Psoas muscle (tissue), 8 donors: ENCODE measurements at regions of chr2 and their contacts with region 1.

Region 1: DNA sequence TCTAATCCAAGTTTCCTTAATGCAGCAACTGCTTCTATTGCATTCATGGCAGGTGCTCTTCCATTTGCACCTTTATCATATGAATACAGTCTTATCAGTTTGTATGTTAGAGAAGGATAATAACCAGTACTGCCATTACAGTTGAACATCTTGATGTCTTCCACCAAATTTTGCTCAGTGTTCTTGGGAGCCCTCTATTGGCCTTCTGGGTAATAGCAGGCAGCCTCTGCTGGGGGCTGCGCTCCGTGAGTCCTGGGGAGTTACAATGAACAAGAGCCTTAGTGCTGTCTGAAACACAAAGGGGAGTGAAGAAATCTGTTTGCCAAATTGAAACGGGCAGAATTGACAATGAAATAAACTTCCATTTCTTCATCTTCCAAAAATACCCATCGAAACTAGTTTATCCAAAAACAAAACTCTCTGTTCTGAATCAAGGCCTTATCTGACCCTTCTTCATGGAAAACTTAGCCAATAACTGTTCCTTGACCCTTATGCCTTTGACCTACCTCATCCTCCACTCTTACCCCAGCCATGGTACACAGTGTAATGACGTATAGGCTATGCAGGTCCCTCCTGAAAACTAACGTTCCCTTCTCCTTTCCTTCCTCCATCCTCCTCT is 79.9 kb downstream of the ALK start:
- DNase-seq: no peak
- ATAC-seq: peak in 3 of 4 donors; percentile 62 to 78 (median 70)
- H3K4me3 ChIP-seq: no peak overlapping the region
- H3K27ac ChIP-seq: no peak overlapping the region
- H3K4me1 ChIP-seq: no peaks in the 10 kb centered on the region
- H3K27me3 ChIP-seq: no peaks in the 10 kb centered on the region
- CTCF ChIP-seq: peak; percentile 84

Region 2: DNA sequence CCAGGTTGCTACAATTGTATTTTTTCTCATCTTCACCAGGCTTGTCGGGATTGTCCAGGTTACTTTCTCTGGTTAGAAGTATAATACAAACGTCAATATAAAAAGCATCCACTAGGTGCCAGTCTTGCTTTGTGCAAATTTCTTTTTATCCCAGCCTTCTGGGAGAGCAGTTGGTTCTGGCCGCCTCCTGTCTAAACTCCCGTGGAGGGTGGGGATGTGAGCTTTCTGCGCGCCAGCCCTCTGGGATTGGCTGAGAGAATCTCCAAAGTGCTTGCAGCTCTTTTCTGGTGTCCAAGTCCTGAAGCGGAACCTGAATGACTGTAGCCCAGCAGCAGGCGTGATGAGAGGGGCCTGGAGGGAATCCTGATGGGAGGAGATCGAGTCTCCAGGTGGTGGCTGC is 882.8 kb before region 1 on chr2:
- intact Hi-C with region 1: loop called in 1 of 2 experiments (anchors 5 kb)
- DNase-seq: peak; percentile 64 to 87
- ATAC-seq: peak; percentile 88 to 92 (median 89)
- H3K4me3 ChIP-seq: no peak overlapping the region
- H3K27ac ChIP-seq: no peak overlapping the region
- H3K4me1 ChIP-seq: peaks cover 5% of the 10 kb centered on the region
- H3K27me3 ChIP-seq: no peaks in the 10 kb centered on the region
- CTCF ChIP-seq: peak; percentile 68

Region 3: DNA sequence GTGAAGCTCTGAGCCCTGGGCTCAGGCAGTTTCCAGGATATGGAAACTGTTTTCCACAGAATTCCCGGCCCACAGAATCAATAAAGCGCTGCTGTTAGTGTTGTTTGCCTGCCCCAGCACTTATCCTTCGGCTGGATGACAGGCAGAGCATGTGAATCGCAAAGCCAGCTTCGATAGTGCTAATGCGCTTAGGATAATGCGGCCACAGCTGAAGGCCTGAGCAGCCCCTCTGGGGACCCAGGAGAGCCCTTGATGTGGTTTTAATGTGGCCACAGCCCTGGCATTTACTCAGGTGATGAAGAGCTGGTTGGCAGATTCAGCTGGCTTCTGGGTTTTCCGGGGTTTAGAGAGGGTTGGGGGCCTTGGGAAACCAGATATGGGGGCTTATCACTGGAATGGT is 790.9 kb before region 1 on chr2:
- intact Hi-C with region 1: no loop called
- DNase-seq: no peak
- ATAC-seq: no peak
- H3K4me3 ChIP-seq: no peak overlapping the region
- H3K27ac ChIP-seq: no peak overlapping the region
- H3K4me1 ChIP-seq: no peaks in the 10 kb centered on the region
- H3K27me3 ChIP-seq: no peaks in the 10 kb centered on the region
- CTCF ChIP-seq: no peak

Region 4: DNA sequence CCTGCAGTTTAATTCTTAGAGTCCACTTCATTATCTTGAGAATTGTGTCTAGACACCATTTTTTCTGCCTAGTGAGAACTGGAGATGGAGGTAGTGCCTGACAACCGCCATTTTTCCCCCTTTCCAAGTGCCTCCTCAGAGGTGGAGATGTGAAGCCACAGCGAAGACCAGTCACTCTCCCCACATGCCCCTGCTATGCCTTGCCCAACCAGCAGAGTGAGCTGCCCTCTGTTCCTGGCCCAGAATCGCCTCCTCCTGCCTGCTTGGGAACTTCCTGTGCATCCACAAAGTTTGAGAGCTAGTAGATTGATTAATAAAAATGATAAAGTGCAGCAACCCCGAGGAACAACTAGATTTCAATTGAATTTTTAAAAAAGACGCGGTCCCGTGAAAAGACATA is 603.0 kb before region 1 on chr2:
- intact Hi-C with region 1: loop called in 1 of 2 experiments (anchors 5 kb)
- DNase-seq: no peak
- ATAC-seq: peak in 2 of 4 donors; percentile 50 to 60
- H3K4me3 ChIP-seq: no peak overlapping the region
- H3K27ac ChIP-seq: no peak overlapping the region
- H3K4me1 ChIP-seq: no peaks in the 10 kb centered on the region
- H3K27me3 ChIP-seq: peaks cover 0 to 14% (median 6%) of the 10 kb centered on the region in 3 donors
- CTCF ChIP-seq: peak; percentile 31

Region 5: GRCh38 chr2:29295857-29296256 is 545.6 kb before region 1 on chr2:
- intact Hi-C with region 1: loop called (anchors 5 kb)
- DNase-seq: no peak
- ATAC-seq: no peak
- H3K4me3 ChIP-seq: no peak overlapping the region
- H3K27ac ChIP-seq: no peak overlapping the region
- H3K4me1 ChIP-seq: no peaks in the 10 kb centered on the region
- H3K27me3 ChIP-seq: peaks cover 0 to 28% (median 2%) of the 10 kb centered on the region in 3 donors
- CTCF ChIP-seq: no peak

Region 6: GRCh38 chr2:29309090-29310029 is 532.1 kb before region 1 on chr2:
- intact Hi-C with region 1: loop called (anchors 5 kb)
- DNase-seq: no peak
- ATAC-seq: peak in 3 of 4 donors; percentile 66 to 88 (median 88)
- H3K4me3 ChIP-seq: no peak overlapping the region
- H3K27ac ChIP-seq: no peak overlapping the region
- H3K4me1 ChIP-seq: no peaks in the 10 kb centered on the region
- H3K27me3 ChIP-seq: no peaks in the 10 kb centered on the region
- CTCF ChIP-seq: peak; percentile 68